Activated B cell treated with CpG ODN at 0.5 μM for 24 hours (primary cell): ENCODE measurements at regions of chr5 and their contacts with region 1.

Region 1: DNA sequence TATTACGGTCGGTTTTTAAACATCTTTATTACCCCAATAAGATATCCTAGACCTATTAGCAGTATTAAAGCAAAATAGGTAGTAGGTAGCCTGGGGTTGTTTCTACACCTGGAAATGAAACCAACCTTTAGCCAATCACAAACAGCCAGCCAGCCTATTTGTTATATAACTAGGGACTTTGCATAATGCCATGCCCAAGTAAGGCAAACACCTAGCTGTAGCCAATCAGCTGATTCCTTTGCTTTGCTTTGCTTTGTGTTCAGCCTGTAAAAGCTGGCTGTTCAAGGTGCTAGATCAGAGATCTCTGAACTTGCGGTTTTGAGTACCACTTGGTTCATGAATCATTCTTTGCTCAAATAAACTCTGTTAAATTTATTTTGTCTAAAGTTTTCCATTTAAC is 46.5 kb upstream of the SETD9 start:
- DNase-seq: no peak
- ATAC-seq: no peak
- H3K4me3 Mint-ChIP-seq: no peak overlapping the region
- H3K27ac Mint-ChIP-seq: no peak overlapping the region
- H3K4me1 Mint-ChIP-seq: peaks cover 17% of the 10 kb centered on the region
- H3K27me3 Mint-ChIP-seq: no peaks in the 10 kb centered on the region
- CTCF ChIP-seq: no peak

Region 2: DNA sequence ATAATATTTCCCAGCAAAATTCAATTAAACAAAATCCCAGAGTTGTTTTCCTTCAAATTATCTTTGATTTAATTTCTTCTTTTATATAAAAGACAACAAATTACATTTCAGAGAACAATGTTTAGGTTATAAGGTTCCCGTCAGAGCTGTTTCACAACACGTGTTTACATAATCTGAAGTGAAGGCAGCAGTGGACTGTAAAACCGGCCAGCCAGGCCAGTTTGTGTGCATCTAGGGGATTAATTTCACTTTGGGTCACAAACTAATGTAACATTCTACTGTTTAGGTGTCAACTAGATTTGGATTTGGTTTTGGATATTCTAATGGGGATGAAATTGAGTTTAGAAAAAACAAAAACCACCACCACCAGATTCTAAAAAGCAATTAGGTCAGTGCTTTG is 1241.7 kb before region 1 on chr5:
- CTCF ChIA-PET with region 1: no interaction called
- POLR2A ChIA-PET with region 1: no interaction called
- intact Hi-C with region 1: no loop called
- DNase-seq: no peak
- ATAC-seq: no peak
- H3K4me3 Mint-ChIP-seq: no peak overlapping the region
- H3K27ac Mint-ChIP-seq: no peak overlapping the region
- H3K4me1 Mint-ChIP-seq: no peaks in the 10 kb centered on the region
- H3K27me3 Mint-ChIP-seq: no peaks in the 10 kb centered on the region
- CTCF ChIP-seq: no peak

Region 3: GRCh38 chr5:56670118-56670483 is 192.8 kb before region 1 on chr5:
- CTCF ChIA-PET with region 1: no interaction called
- POLR2A ChIA-PET with region 1: no interaction called
- intact Hi-C with region 1: no loop called
- DNase-seq: peak; percentile 51
- ATAC-seq: peak; percentile 91
- H3K4me3 Mint-ChIP-seq: peak overlapping the region; percentile 69
- H3K27ac Mint-ChIP-seq: peak overlapping the region; percentile 93
- H3K4me1 Mint-ChIP-seq: peaks cover 83% of the 10 kb centered on the region
- H3K27me3 Mint-ChIP-seq: no peaks in the 10 kb centered on the region
- CTCF ChIP-seq: no peak

Region 4: GRCh38 chr5:56852228-56853000 is 10.5 kb before region 1 on chr5:
- CTCF ChIA-PET with region 1: interaction called, 3 read pairs
- POLR2A ChIA-PET with region 1: no interaction called
- intact Hi-C with region 1: loop called (anchors 2 kb)
- DNase-seq: no peak
- ATAC-seq: no peak
- H3K4me3 Mint-ChIP-seq: peak overlapping the region; percentile 54
- H3K27ac Mint-ChIP-seq: peak overlapping the region; percentile 8
- H3K4me1 Mint-ChIP-seq: peaks cover 95% of the 10 kb centered on the region
- H3K27me3 Mint-ChIP-seq: no peaks in the 10 kb centered on the region
- CTCF ChIP-seq: no peak

Region 5: DNA sequence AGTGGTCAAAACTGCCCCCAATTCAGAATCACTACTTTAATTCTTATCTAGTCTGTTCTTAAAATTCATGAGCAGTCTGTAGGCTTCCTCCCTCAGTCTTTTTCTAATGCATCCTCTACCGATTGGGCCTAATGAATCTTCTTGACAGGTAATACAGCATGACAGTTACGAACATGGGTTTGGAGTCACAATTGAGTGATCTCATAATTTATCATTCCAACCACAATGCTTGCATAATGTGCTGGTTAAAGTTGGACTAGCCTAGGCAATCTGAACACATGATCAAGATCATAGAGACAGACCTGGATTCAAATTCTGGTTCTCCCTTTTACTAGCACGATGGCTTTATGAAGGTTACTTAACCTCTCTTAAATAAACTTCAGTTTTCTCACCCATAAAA is 13.4 kb after region 1 on chr5:
- CTCF ChIA-PET with region 1: no interaction called
- POLR2A ChIA-PET with region 1: no interaction called
- intact Hi-C with region 1: loop called (anchors 1 kb)
- DNase-seq: no peak
- ATAC-seq: no peak
- H3K4me3 Mint-ChIP-seq: no peak overlapping the region
- H3K27ac Mint-ChIP-seq: peak overlapping the region; percentile 43
- H3K4me1 Mint-ChIP-seq: peaks cover 32% of the 10 kb centered on the region
- H3K27me3 Mint-ChIP-seq: no peaks in the 10 kb centered on the region
- CTCF ChIP-seq: no peak

Region 6: DNA sequence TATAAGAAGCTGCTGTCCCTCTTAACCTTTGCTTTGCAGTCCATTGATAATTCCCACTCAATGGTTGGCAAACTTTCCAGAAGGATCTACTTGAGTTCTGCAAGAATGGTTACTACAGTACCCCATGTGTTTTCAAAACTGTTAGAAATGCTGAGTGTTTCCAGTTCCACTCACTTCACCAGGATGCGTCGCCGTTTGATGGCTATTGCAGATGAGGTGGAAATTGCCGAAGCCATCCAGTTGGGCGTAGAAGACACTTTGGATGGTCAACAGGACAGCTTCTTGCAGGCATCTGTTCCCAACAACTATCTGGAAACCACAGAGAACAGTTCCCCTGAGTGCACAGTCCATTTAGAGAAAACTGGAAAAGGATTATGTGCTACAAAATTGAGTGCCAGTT is 18.7 kb after region 1 on chr5:
- CTCF ChIA-PET with region 1: no interaction called
- POLR2A ChIA-PET with region 1: no interaction called
- intact Hi-C with region 1: loop called (anchors 2 kb)
- DNase-seq: no peak
- ATAC-seq: no peak
- H3K4me3 Mint-ChIP-seq: no peak overlapping the region
- H3K27ac Mint-ChIP-seq: peak overlapping the region; percentile 51
- H3K4me1 Mint-ChIP-seq: no peaks in the 10 kb centered on the region
- H3K27me3 Mint-ChIP-seq: no peaks in the 10 kb centered on the region
- CTCF ChIP-seq: no peak